Heart left ventricle (tissue), 16 donors: ENCODE measurements at regions of chr11 and their contacts with region 1.

Region 1: GRCh38 chr11:82474885-82475284 is 258.8 kb downstream of the FAM181B start:
- DNase-seq: no peak
- ATAC-seq: no peak
- H3K4me3 ChIP-seq: no peak overlapping the region
- H3K27ac ChIP-seq: no peak overlapping the region
- H3K4me1 ChIP-seq: no peaks in the 10 kb centered on the region
- H3K27me3 ChIP-seq: no peaks in the 10 kb centered on the region
- CTCF ChIP-seq: no peak
- POLR2A ChIP-seq: no peak

Region 2: GRCh38 chr11:82546661-82547557 is 72.0 kb after region 1 on chr11:
- intact Hi-C with region 1: loop called in 1 of 10 experiments (anchors 10 kb)
- DNase-seq: no peak
- ATAC-seq: peak in 1 of 4 donors; percentile 36
- H3K4me3 ChIP-seq: no peak overlapping the region
- H3K27ac ChIP-seq: no peak overlapping the region
- H3K4me1 ChIP-seq: no peaks in the 10 kb centered on the region
- H3K27me3 ChIP-seq: no peaks in the 10 kb centered on the region
- CTCF ChIP-seq: no peak
- POLR2A ChIP-seq: no peak

Region 3: DNA sequence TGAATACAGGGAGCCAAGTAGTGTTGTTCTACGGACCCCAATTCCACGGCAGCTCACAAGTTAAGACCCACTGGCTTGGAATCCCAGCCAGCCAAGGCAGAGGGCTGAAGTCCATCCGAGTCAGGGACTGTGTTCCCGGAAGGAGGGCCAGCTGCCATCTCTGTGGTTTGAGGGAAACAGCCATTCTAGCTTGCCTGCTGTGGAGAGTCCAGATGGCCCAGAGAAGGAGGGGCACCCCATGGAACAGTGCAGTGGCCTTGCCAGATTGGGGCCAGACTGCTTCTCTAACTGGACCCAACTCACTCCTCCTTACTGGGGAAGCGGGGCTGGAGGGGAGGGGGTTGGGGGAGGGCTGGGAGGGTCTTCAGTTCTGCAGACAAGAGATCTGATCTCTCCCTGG is 102.4 kb after region 1 on chr11:
- intact Hi-C with region 1: no loop called
- DNase-seq: peak in 1 of 5 donors; percentile 48
- ATAC-seq: no peak
- H3K4me3 ChIP-seq: no peak overlapping the region
- H3K27ac ChIP-seq: no peak overlapping the region
- H3K4me1 ChIP-seq: no peaks in the 10 kb centered on the region
- H3K27me3 ChIP-seq: no peaks in the 10 kb centered on the region
- CTCF ChIP-seq: no peak
- POLR2A ChIP-seq: no peak